KBM-7 (cell line): ENCODE measurements at regions of chr9 and their contacts with region 1.

Region 1: DNA sequence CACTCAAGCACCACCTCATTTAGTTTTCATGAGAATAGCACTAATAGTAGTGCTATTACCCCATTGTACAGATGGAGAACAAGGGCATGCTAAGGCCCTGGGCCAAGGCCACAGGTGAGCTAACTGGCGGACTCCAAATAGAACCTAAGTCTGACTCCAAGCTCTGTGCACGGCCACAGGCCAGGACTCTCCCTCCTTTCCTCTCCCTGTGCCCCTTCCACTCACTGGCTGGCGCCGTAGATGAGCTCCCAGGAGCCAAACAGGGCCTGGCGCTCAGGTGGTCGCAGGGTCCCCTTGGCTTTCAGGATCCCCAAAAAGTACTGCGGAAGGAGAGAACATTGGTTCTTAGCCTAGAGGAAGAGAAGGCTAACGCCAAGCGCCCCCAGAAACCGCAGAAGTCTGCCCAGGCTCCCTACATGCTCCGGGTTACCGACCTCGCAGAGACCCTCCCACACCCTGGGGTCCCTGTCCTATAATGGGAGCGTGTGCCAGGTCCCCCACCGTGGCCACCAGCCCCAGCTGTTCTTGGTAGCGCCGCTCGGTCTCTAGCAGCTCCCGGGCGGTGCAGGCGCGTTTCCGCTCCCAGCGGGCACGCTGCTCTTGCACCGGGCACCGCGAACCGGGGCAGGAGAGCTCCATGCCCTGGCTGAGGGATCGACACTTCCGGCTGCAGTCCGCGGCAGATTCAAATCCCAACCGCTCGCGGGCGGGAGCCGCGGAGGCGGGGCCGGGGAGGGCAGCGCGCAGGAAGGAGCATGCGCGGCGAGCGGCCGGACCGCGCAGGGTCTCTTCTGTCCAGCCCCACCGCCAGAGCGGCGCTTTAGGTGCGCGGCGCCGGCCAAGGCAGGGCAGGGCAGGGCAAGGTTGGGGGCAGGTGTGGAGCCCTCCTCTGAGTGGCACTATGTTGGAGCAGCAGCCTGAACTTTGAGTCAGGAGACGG is at the start of gene ARHGEF39:
- DNase-seq: peak; percentile 88

Region 2: DNA sequence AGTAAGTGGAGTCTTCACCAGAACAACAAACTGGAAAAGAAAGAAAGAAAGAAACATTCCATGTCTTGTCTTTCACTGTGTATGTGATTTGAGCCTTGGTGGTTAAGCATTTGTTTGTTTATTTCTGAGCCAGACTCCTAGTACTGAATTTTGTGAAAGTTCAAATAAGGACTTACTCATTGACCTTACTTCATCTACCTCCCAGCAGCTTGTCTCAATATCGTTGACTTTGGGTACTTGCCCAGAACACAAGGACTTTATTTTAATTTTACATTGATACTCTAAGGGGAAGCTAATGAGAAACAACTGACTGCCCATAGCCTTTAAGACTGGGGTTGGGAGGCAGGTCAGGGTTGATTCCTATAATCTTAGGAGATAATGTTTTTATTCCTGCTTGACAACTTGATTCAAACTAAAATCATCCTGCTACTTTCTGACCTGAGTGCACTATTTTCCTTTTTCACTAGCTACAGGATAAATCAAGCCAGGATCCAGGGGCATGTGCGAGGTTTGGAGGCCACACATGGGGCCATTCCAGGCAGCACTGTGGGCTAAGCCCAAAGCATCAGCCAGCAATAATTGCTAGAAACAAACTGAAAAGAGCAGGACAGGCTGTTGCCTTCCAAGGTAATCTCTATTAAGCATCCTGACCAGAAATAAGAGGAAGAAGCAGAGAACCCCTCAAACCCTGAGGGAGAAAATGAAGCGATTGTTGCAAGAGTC is 313.8 kb before region 1 on chr9:
- in situ Hi-C with region 1: no loop called
- DNase-seq: no peak

Region 3: DNA sequence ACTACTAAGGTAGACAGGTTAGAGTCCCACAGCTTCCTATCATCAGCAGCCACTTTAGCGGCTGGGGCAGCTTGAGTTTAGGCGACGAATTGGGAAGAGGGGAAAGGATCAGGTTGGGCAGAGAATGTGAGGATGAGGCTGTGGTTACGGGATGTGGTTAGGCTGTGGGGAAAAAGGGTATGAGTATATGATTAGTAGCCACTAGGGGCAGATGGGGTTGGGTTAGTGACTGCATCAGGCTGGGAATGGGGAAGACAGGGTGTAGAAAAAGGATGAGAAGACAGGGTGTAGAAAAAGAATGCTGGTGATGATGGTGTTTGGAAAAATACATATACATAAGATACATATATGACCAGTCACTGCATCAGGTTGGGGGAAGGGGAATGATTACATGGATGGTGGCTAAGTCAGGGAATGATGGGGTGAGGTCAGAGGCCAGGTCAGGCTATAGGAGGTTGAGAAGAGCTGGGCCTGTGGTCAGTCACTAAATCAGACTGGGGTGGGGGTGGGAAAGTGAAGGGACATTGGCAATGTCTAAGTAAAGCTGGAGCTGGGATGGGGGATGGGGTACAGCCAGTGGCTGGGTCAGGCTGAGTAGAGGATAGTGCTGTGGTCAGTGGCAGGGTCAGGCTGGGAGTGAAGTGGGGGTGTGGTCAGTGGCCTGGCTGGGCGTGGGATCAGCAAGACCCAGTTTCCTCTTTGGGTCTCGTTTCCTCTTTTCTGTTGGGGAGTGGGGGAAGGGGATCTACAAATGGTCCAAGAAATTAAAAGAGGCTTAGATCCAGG is 65.1 kb after region 1 on chr9:
- in situ Hi-C with region 1: loop called (anchors 10 kb)
- DNase-seq: peak; percentile 82